ENCODE measurements at regions of chr6 and their contacts with region 1.

Region 1: DNA sequence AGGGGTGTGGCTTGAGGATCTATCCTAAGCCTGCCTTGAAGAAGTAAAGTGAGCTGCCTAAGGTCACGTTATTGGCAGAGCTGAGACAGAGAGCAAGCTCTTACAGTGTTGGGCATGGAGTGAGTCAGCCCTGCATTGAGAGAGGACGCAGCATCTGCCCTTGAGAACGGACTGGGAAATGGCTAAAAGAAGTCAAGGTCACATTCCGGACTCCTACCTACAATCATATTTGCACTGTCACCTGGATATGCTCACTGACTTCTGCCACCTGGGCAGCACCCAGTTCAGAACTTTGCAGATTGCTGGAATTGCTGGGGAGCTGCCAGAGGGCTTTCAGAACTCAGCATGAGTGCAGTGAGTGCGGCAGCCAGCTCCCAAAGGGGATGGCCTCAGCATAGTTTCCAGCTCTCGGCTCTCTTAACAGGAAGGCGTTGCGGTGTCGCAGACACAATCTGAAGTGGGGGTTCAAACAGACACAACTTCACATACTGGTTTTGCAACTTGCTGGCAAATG is 199.3 kb upstream of the SGK1 start:
- DNase-seq: peak; percentile 95
- H3K4me3 Mint-ChIP-seq: peak overlapping the region; percentile 53
- H3K27ac Mint-ChIP-seq: peak overlapping the region; percentile 73
- H3K4me1 Mint-ChIP-seq: peaks cover 41% of the 10 kb centered on the region
- H3K27me3 Mint-ChIP-seq: no peaks in the 10 kb centered on the region
- CTCF ChIP-seq: no peak

Region 2: DNA sequence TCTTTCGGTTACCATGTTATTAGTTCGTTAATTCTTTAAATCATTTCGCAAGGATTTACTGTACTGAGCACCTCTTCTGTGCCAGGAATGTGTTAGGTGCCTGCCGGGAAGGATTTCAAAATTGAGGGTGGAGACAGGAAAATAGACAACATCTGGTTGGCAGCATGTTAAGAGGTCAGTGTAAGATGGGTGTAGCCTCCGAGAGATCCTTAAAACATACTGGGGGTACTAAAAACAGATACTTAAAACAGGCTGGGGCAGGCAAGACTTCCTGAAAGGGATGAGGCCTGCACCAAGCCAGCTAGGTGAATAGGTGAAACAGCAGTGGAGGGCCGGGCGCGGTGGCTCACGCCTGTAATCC is 21.3 kb before region 1 on chr6:
- CTCF ChIA-PET with region 1: interaction called, 3 read pairs
- POLR2A ChIA-PET with region 1: interaction called, 4 read pairs
- intact Hi-C with region 1: loop called (anchors 1 kb)
- DNase-seq: peak; percentile 94
- H3K4me3 Mint-ChIP-seq: peak overlapping the region; percentile 15
- H3K27ac Mint-ChIP-seq: peak overlapping the region; percentile 90
- H3K4me1 Mint-ChIP-seq: peaks cover 12% of the 10 kb centered on the region
- H3K27me3 Mint-ChIP-seq: no peaks in the 10 kb centered on the region
- CTCF ChIP-seq: no peak